Lower lobe of right lung (tissue), 2 donors: ENCODE measurements at regions of chr12 and their contacts with region 1.

Region 1: DNA sequence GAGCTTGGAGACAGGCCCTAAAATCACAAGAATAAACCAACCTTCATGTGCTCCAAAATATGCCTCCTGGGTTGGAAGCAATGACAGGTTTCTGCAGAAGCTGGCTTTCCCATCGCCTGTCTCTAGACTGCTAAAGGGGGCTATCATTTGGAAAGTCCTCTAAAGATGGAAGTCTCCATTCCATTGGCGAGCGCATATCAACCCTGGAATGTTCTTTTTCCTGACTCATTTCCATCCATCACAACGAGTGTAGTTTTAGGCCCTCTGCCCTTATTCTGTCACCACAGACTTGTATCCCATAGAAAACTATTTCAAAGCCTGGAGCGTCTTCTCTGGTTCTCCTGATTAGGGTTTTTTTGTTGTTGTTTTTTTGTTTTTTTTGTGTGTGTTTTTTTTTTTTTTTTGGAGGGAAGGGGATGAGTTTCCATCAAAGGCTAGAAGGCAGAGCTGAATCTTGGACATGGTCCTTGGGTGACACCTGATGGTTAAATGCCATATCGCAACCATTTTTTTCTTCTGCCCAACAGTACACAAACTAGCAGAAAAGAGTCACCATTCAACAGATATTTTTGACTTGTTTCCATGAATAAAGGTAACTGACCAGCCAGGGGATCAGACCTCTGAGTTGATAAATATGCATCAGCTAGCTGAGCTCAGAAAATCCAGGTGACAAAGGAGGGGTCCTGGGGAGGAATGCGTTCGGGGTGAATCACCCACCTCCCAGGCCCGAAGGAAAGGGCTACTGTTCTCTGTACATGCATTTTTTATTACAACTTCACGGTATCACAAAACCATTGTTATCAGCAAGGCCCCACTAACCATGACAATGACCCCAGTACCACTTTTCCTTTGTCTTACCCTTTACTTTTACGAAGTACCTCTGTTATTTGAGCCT is 40.5 kb downstream of the KCNA5 start:
- DNase-seq: no peak
- ATAC-seq: peak in 1 of 2 donors; percentile 62
- H3K4me3 ChIP-seq: no peak overlapping the region
- H3K27ac ChIP-seq: no peak overlapping the region
- H3K4me1 ChIP-seq: no peaks in the 10 kb centered on the region
- H3K27me3 ChIP-seq: no peaks in the 10 kb centered on the region
- CTCF ChIP-seq: peak; percentile 63

Region 2: DNA sequence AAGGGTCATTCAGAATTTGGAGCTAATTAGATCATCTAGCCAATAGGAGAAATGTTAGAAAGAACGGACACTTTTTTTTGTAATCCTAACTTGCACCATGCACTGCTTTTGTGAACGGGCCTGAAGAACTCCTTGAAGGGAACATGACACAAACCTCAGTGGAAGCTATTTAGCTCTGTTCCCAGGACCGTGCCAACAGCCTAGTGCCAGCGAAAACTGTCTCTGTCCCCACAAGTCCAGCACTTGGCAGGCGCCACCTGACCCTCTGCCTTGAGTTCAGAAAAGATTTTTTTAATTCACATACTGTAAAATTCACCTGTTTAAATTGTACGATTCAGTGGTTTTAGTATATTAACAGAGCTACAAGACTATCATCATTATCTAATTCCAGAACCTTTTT is 71.9 kb before region 1 on chr12:
- intact Hi-C with region 1: no loop called
- DNase-seq: no peak
- ATAC-seq: no peak
- H3K4me3 ChIP-seq: no peak overlapping the region
- H3K27ac ChIP-seq: no peak overlapping the region
- H3K4me1 ChIP-seq: no peaks in the 10 kb centered on the region
- H3K27me3 ChIP-seq: no peaks in the 10 kb centered on the region
- CTCF ChIP-seq: no peak

Region 3: DNA sequence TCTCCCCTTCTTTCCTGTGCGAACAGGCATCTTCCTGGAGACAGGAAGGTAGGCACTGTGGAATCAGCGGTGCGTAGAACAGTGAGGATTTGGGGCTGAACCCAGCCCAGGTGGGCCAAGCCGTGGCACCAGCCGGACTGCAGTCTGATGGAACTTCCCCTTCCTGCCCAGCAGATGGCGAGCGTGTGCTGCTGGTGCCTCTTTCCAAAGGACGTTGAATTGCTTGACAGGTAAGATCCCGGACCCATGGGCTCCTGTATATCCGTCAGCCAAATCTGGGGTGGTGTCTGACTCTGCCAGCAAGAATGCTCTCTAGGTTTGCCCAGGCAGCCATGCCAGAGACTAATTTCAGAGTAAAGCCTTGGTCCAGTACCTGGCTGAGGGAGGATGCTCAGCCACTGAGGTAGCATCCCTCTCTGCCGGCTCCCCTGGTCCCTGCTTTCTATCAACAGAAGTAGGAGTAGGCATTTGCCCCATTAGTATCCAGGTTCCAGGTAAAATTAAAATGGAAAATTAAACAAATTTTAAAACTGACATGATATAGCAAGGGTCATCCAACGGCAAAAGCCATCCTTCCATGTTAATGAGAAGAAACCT is 61.6 kb before region 1 on chr12:
- intact Hi-C with region 1: loop called (anchors 10 kb)
- DNase-seq: no peak
- ATAC-seq: peak; percentile 59 to 65
- H3K4me3 ChIP-seq: no peak overlapping the region
- H3K27ac ChIP-seq: no peak overlapping the region
- H3K4me1 ChIP-seq: no peaks in the 10 kb centered on the region
- H3K27me3 ChIP-seq: peaks cover 11% of the 10 kb centered on the region
- CTCF ChIP-seq: peak; percentile 88

Region 4: DNA sequence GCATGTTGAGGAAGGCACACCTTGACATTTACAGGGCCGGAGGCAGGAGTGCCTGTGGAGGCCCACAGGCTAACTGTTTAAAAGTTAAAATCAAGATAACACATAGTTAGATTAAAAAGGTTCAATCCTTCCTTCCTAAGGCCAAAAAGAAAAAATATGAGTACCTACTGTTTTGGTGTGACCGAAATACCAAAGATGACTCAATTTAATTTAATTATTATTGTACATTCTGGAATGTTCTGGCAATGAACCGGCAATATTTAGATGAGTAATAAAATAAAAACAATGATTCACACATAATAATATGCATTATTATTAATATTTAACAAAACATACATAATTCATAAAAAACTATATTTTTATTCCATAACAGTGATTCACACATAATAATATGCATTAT is 210.9 kb after region 1 on chr12:
- intact Hi-C with region 1: no loop called
- DNase-seq: no peak
- ATAC-seq: no peak
- H3K4me3 ChIP-seq: no peak overlapping the region
- H3K27ac ChIP-seq: no peak overlapping the region
- H3K4me1 ChIP-seq: no peaks in the 10 kb centered on the region
- H3K27me3 ChIP-seq: no peaks in the 10 kb centered on the region
- CTCF ChIP-seq: no peak